ENCODE measurements at regions of chr6 and their contacts with region 1.

Region 1: DNA sequence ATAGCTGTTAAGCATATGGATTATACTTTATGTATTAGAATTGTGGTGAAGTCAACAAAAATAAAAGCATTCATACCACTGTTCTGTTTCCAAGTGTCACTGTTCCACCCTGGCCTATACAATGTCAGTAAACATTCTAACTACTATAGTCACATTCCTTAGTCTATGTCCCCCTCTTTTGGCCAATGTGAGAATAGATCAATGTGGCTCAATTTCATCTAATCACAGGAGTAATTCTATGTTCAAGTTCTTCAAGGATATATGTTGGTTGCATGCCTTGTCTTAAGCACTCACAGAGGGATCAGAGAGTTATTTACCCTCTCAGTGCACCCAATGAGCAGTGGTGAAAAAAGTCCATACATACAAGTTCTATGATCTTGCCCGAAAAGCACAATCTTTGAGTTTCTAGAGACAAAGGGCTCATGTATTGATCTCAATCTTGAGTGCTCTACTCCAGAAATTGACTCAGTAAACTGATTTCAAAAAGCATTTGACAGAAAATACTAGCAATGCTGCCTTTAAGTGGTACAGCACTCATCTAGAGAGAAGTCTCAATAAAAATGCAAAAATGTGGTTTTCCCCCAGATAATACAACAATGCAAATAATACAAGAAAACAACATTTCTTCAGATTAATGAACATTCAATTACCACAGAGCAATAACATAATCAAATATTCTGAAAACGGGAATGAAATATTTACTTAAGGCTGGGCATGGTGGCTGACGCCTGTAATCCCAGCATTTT is 16.5 kb downstream of the SMLR1 start:
- DNase-seq: peak; percentile 78
- H3K4me3 Mint-ChIP-seq: no peak overlapping the region
- H3K27ac Mint-ChIP-seq: no peak overlapping the region
- H3K4me1 Mint-ChIP-seq: peaks cover 2% of the 10 kb centered on the region
- H3K27me3 Mint-ChIP-seq: no peaks in the 10 kb centered on the region

Region 2: DNA sequence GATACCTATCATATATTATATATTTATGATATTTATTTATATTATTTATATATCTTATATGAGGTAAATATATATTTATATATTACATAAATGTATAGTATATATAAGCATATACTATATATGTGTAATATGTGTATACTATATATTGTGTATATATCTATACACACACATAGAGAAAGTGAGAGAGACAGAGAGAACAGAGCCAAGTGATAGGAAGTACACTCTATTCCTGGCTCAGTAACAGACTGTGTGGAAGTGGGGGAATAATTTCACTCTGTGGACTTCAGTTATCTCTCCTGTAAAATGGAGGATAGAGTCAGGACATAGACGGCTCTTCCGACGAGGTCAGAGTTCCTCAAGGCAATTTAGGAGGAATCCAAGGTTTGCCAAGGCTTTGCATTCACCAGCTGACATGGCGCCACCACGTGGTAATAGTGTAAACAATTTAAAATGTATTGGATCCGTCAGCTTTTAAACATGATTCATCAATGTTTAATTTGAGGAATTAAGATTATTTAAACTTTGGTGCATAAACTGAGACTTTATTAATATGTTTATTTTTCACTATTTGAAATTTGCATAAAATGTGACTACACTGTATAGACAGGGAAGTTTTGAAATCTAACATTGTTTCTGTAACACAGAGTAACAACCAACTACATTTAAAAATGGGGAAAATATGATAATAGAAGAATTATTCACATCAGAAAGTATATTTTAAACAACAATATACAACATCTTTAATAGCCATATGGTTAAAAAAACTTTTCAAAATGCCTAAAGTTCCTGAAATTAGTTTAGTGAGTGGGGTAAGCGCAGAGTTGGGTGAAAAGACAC is 907.2 kb before region 1 on chr6:
- intact Hi-C with region 1: loop called (anchors 10 kb)
- DNase-seq: peak; percentile 78
- H3K4me3 Mint-ChIP-seq: no peak overlapping the region
- H3K27ac Mint-ChIP-seq: no peak overlapping the region
- H3K4me1 Mint-ChIP-seq: no peaks in the 10 kb centered on the region
- H3K27me3 Mint-ChIP-seq: peaks cover 30% of the 10 kb centered on the region

Region 3: GRCh38 chr6:130037207-130037811 is 806.4 kb before region 1 on chr6:
- intact Hi-C with region 1: loop called (anchors 10 kb)
- DNase-seq: no peak
- H3K4me3 Mint-ChIP-seq: no peak overlapping the region
- H3K27ac Mint-ChIP-seq: no peak overlapping the region
- H3K4me1 Mint-ChIP-seq: peaks cover 32% of the 10 kb centered on the region
- H3K27me3 Mint-ChIP-seq: peaks cover 3% of the 10 kb centered on the region

Region 4: GRCh38 chr6:130293800-130294199 is 549.9 kb before region 1 on chr6:
- intact Hi-C with region 1: loop called (anchors 1 kb)
- DNase-seq: peak; percentile 81
- H3K4me3 Mint-ChIP-seq: no peak overlapping the region
- H3K27ac Mint-ChIP-seq: no peak overlapping the region
- H3K4me1 Mint-ChIP-seq: peaks cover 2% of the 10 kb centered on the region
- H3K27me3 Mint-ChIP-seq: peaks cover 15% of the 10 kb centered on the region

Region 5: GRCh38 chr6:130322673-130323268 is 521.0 kb before region 1 on chr6:
- intact Hi-C with region 1: loop called (anchors 1 kb)
- DNase-seq: peak; percentile 85
- H3K4me3 Mint-ChIP-seq: no peak overlapping the region
- H3K27ac Mint-ChIP-seq: no peak overlapping the region
- H3K4me1 Mint-ChIP-seq: peaks cover 12% of the 10 kb centered on the region
- H3K27me3 Mint-ChIP-seq: peaks cover 21% of the 10 kb centered on the region

Region 6: GRCh38 chr6:130796313-130796905 is 47.3 kb before region 1 on chr6:
- intact Hi-C with region 1: no loop called
- DNase-seq: no peak
- H3K4me3 Mint-ChIP-seq: no peak overlapping the region
- H3K27ac Mint-ChIP-seq: no peak overlapping the region
- H3K4me1 Mint-ChIP-seq: no peaks in the 10 kb centered on the region
- H3K27me3 Mint-ChIP-seq: peaks cover 4% of the 10 kb centered on the region

Measured in activated CD4-positive, alpha-beta T cell treated with anti-CD3 and anti-CD28 coated beads, Interleukin-2, amount 10 ng/mL, durations not matched to agents 24 days and 14 days (primary cell).